ENCODE measurements at regions of chr15 and their contacts with region 1.

Region 1: GRCh38 chr15:50908210-50909009 is at the start of gene AP4E1:
- DNase-seq: peak; percentile 90
- H3K4me3 ChIP-seq: peak within 1 kb of the TSS; percentile 63 to 91 (median 81)
- H3K27ac ChIP-seq: peak within 1 kb of the TSS; percentile 87
- H3K4me1 ChIP-seq: peaks cover 24% of the 10 kb centered on the region
- H3K27me3 ChIP-seq: no peaks in the 10 kb centered on the region
- CTCF ChIP-seq: peak; percentile 84 to 95
- total RNA-seq, gene AP4E1: 21.3 to 21.4 TPM

Region 2: DNA sequence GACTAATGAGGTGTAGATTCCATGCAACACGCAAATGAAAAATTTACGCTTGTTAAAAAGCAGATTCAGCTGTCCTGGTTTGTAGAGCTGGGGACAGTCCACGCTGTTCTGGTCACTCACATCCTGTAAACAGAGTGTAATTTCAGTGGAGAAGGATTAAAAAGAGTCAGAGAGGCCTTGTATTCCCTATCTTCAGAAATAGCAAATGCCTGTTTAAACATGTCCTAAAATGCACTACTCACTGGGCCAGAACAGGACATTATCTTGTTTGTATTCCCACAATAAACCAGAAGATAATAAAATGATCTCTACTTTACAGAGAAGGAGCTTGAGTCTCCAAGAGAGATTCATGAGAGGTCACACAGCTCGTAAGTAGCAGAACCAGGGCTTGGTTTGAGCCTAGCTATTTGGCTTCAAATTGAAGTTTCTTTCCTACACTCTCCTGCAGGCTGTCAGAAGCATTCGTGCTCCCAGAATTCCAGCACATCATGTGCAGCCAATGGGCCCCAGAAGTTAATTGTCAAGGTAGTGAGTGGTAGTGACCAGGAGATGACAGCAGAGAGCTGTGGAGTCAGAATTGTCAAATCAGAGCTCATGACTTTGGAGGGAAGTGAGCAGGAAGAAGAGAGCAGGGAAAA is 1031.9 kb before region 1 on chr15:
- CTCF ChIA-PET with region 1: no interaction called
- dilution Hi-C with region 1: no loop called
- in situ Hi-C with region 1: no loop called
- intact Hi-C with region 1: loop called (anchors 10 kb)
- DNase-seq: peak; percentile 38
- H3K4me3 ChIP-seq: no peak overlapping the region
- H3K27ac ChIP-seq: no peak overlapping the region
- H3K4me1 ChIP-seq: peaks cover 8% of the 10 kb centered on the region
- H3K27me3 ChIP-seq: no peaks in the 10 kb centered on the region
- CTCF ChIP-seq: peak; percentile 39 to 69

Region 3: DNA sequence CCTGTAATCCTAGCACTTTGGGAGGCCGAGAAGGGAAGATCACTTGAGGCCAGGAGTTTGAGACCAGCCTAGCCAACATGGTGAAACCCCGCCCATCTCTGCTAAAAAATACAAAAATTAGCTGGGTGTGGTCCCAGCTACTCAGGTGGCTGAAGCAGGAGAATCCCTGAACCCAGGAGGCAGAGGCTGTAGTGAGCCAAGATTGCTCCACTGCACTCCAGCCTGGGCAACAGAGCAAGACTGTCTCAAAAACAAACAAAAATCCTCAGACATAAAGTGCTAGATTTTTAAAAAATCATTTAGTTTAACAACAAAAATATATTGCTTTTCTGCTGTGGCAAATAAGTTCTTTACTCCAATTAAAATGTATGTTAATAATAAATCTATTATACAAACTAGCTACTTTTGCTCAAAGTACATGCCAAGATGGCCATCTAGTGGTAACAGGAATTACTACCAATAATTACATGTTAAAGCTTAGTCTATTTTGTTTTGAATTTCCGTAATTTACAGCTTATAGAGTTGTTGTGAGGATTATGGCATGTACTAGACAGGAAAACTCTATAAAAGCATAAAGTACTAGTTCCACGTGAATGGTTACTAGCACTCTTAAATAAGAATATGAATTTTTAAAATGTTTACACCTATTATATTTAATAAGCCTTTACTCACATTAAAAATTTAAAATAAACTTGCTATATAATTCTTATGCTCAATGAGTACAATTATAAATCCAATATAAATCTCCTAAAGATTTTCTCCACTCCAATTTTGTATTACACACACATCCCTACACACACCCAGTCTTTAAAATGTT is 592.4 kb before region 1 on chr15:
- CTCF ChIA-PET with region 1: no interaction called
- dilution Hi-C with region 1: no loop called
- in situ Hi-C with region 1: no loop called
- intact Hi-C with region 1: loop called (anchors 5 kb)
- DNase-seq: peak; percentile 22
- H3K4me3 ChIP-seq: no peak overlapping the region
- H3K27ac ChIP-seq: no peak overlapping the region
- H3K4me1 ChIP-seq: no peaks in the 10 kb centered on the region
- H3K27me3 ChIP-seq: no peaks in the 10 kb centered on the region
- CTCF ChIP-seq: peak; percentile 60 to 62

Region 4: GRCh38 chr15:50496692-50497091 is 411.7 kb before region 1 on chr15:
- CTCF ChIA-PET with region 1: no interaction called
- dilution Hi-C with region 1: no loop called
- in situ Hi-C with region 1: no loop called
- intact Hi-C with region 1: loop called (anchors 5 kb)
- DNase-seq: peak; percentile 8
- H3K4me3 ChIP-seq: no peak overlapping the region
- H3K27ac ChIP-seq: no peak overlapping the region
- H3K4me1 ChIP-seq: no peaks in the 10 kb centered on the region
- H3K27me3 ChIP-seq: no peaks in the 10 kb centered on the region
- CTCF ChIP-seq: no peak

Region 5: DNA sequence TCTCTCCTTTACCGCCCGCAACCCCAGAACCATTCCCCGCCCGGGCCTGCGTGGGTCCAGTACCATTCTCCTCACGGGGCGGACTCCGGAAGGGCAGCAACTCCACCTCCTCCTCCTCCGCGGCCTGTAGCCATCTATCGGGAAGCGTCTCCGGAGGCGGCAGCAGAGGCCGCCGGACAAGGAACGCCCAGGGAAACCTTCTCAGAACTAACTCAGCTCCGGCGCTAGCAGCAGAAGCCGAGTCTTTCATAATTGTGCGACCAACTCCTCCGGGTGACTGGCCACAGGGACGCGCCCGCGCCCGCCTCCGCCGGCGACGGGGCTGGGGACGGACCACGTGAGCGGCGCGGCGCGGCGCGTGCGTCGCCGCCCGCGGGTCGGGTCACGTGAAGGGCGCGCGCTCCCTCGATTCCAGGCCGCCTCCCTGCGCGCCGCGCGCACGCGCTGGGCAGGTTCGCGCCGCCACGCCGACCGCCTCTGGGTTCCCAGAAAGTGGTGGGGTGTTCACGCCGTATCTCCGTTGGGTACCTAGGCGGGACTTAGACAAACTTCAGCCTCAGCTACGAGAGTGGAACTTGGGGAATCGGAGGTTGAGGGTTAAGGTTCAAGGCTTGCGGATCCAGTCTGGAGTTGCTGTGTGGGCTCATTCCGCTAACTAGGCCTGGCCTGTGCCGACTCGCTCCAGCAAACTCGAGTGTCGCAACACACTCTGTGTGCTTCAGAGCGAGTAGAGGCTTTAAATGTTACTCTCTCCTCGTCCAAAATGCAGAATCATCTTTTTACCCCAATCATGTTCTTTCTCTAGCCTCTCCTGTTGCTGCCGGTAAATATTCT is 221.7 kb before region 1 on chr15 and contains the start of gene TRPM7:
- CTCF ChIA-PET with region 1: no interaction called
- dilution Hi-C with region 1: no loop called
- in situ Hi-C with region 1: loop called in 1 of 2 experiments (anchors 10 kb)
- intact Hi-C with region 1: no loop called
- DNase-seq: peak; percentile 87
- H3K4me3 ChIP-seq: peak within 1 kb of the TSS; percentile 53 to 94 (median 64)
- H3K27ac ChIP-seq: peak within 1 kb of the TSS; percentile 62
- H3K4me1 ChIP-seq: peaks cover 23% of the 10 kb centered on the region
- H3K27me3 ChIP-seq: no peaks in the 10 kb centered on the region
- CTCF ChIP-seq: peak in 1 of 2 donors; percentile 28
- total RNA-seq, gene TRPM7: 35.6 to 64.8 TPM

Region 6: GRCh38 chr15:50855092-50855396 is 53.4 kb before region 1 on chr15:
- CTCF ChIA-PET with region 1: no interaction called
- dilution Hi-C with region 1: no loop called
- in situ Hi-C with region 1: no loop called
- intact Hi-C with region 1: no loop called
- DNase-seq: no peak
- H3K4me3 ChIP-seq: no peak overlapping the region
- H3K27ac ChIP-seq: no peak overlapping the region
- H3K4me1 ChIP-seq: peaks cover 15% of the 10 kb centered on the region
- H3K27me3 ChIP-seq: no peaks in the 10 kb centered on the region
- CTCF ChIP-seq: no peak

Region 7: DNA sequence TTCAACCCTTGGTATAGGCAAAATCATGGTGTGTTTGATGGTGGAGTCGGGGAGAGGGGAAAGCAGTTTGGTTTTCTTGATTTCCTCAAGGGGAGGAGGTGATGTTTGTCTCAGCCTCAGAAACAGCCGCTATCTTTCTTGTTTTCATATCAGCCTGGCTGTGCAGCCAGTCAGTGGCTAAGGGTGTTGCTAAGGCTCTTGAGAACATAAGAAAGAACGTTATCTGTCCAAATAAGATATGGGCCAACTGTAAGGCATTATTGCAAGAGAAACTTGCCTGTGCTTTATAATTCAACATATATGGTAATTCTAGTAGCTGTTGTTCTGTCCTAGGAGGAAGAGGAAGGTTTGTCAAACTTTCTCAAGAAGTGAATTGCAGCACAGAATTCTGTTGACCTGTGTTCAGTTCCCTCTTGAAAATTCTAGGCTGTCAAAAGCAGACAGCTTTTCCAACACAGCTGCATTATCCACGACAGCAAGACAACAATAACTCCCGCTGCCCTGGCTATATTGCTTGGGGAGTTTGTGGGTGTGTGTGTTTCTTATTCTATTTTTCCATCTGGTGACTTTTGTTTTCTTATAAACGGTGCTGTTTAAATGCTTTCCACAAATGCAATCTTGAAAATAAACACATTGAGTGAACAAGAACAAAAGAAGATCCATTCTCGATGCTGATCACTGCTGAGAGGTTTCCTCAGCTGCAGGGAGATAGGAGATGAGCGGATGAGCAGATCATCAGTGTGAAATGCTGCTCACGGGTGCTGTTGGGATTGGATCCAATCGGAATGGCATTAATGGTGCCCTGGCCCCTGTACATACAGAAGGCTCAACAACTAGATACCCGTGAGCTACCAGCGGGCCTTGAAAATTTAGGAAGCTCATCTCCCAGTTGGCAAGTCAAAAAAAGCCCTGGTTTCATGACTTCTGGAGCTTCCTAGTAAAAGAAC is 277.1 kb after region 1 on chr15:
- CTCF ChIA-PET with region 1: no interaction called
- dilution Hi-C with region 1: no loop called
- in situ Hi-C with region 1: no loop called
- intact Hi-C with region 1: no loop called
- DNase-seq: no peak
- H3K4me3 ChIP-seq: no peak overlapping the region
- H3K27ac ChIP-seq: no peak overlapping the region
- H3K4me1 ChIP-seq: peaks cover 5% of the 10 kb centered on the region
- H3K27me3 ChIP-seq: no peaks in the 10 kb centered on the region
- CTCF ChIP-seq: no peak

Region 8: GRCh38 chr15:51380999-51381795 is 472.8 kb after region 1 on chr15:
- CTCF ChIA-PET with region 1: no interaction called
- dilution Hi-C with region 1: no loop called
- in situ Hi-C with region 1: no loop called
- intact Hi-C with region 1: loop called (anchors 1 kb)
- DNase-seq: peak; percentile 61
- H3K4me3 ChIP-seq: no peak overlapping the region
- H3K27ac ChIP-seq: no peak overlapping the region
- H3K4me1 ChIP-seq: peaks cover 3% of the 10 kb centered on the region
- H3K27me3 ChIP-seq: no peaks in the 10 kb centered on the region
- CTCF ChIP-seq: peak; percentile 94